Dendritic cell treated with granulocyte-macrophage colony-stimulating factor and Interleukin-4, amounts not matched to agents 40 ng/mL and 50 ng/mL, for 4 days (primary cell): ENCODE measurements at regions of chr10 and their contacts with region 1.

Region 1: GRCh38 chr10:93115661-93116383 is 42.1 kb downstream of the CYP26A1 start:
- H3K4me3 Mint-ChIP-seq: no peak overlapping the region
- H3K27ac Mint-ChIP-seq: no peak overlapping the region
- H3K4me1 Mint-ChIP-seq: peaks cover 5% of the 10 kb centered on the region
- H3K27me3 Mint-ChIP-seq: peaks cover 50% of the 10 kb centered on the region

Region 2: GRCh38 chr10:93224005-93224779 is 108.4 kb after region 1 on chr10:
- intact Hi-C with region 1: loop called (anchors 1 kb)
- H3K4me3 Mint-ChIP-seq: no peak overlapping the region
- H3K27ac Mint-ChIP-seq: no peak overlapping the region
- H3K4me1 Mint-ChIP-seq: no peaks in the 10 kb centered on the region
- H3K27me3 Mint-ChIP-seq: peaks cover 47% of the 10 kb centered on the region

Region 3: DNA sequence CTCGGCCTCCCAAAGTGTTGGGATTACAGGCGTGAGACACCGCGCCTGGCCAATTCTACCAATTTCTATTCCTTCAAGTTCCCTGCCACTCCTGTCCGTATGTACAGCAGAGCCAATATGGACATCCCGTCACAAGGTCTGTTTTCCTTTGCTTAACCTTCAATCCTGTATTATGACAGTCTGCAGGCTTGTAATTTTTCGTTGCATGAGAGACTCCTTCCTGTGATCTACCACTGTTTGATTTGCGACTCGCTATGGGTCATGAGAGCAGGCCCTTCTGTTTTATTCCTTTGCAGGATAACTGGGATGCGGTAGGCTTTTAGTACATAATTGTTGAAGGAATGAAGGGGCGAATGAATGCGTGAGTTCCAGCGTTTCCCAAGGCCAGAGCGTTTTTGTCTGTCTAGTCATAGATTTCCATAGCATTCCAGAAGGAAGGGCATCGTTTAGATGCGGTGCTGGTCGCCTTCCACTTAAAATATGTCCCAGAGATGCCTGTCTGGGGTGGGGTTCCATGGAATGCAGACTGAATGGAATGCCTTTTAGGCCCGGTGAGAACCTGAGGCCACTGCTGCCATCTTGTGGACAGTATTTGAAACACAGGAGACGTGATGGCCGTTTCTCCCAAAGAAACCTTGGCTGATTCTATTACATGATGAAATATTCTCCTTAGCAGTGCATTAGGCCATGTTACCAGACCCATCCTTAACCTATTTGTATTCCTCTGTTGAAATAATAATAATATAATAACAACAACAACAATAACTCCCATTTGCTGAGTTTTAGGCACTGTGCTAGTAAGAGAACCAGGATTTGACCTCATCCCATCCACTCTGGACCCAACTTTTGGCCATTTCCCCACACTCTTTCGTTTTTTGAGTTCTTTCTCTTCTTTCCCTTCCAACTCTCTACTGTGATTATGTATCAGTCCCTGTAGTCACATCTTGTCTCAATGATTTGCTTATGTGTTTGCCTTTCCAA is 173.1 kb after region 1 on chr10:
- intact Hi-C with region 1: loop called (anchors 2 kb)
- H3K4me3 Mint-ChIP-seq: no peak overlapping the region
- H3K27ac Mint-ChIP-seq: no peak overlapping the region
- H3K4me1 Mint-ChIP-seq: peaks cover 8% of the 10 kb centered on the region
- H3K27me3 Mint-ChIP-seq: peaks cover 8% of the 10 kb centered on the region

Region 4: GRCh38 chr10:93352638-93353383 is 237.0 kb after region 1 on chr10:
- intact Hi-C with region 1: loop called (anchors 10 kb)
- H3K4me3 Mint-ChIP-seq: no peak overlapping the region
- H3K27ac Mint-ChIP-seq: no peak overlapping the region
- H3K4me1 Mint-ChIP-seq: peaks cover 2% of the 10 kb centered on the region
- H3K27me3 Mint-ChIP-seq: no peaks in the 10 kb centered on the region

Region 5: GRCh38 chr10:93458821-93459257 is 343.0 kb after region 1 on chr10:
- intact Hi-C with region 1: no loop called
- H3K4me3 Mint-ChIP-seq: no peak overlapping the region
- H3K27ac Mint-ChIP-seq: peak overlapping the region; percentile 30
- H3K4me1 Mint-ChIP-seq: peaks cover 36% of the 10 kb centered on the region
- H3K27me3 Mint-ChIP-seq: no peaks in the 10 kb centered on the region